CD8-positive, alpha-beta memory T cell (primary cell): ENCODE measurements at regions of chr1 and their contacts with region 1.

Region 1: DNA sequence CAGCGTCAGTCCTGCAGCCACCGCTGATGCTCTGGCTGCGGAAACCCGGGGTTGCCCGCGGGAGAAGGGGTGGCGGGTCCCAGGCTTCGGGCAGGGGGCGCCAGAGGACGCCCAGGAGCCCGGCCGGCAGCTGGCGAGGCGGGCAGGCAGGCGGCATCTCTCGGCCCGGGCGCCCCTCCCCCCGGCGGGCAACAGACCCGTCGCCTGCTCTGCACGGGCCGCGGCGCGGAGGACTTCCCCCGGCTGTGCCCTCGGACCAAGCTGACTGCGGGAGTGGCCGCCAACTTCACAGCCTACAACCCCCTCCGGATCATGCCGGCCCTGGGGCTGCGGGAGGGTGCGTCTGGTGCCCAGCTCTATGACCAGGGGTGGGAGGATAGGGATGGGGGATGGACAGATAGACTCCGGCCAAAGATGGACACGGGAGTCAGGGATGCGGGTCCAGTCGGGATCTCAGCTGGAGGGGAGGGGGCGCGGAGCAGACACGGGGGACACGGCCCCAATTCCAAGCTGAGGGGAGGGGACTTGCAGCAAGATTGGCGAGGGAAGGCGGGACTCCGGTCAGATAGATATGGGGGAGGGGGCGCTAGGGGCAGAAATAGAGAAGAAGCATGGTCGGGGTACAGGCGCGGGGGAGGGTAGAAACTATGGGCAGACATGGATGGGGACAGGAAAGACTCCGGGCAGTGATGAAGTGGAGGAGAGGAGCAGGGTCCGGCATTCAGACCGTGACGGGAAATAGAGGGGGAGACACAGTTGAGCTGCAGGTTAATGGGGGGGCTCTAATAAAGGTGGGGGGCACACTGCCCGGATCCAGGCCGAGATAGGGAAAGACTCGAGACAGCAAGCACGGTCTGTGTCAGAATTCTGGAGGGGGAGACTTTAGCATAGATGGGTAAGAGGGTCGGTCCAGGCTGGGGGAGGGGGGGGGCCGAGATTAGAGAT is 1.1 kb downstream of the ADGRB2 start:
- DNase-seq: peak; percentile 60 to 78 (median 67)
- H3K4me3 ChIP-seq: peak overlapping the region; percentile 60
- H3K4me3 Mint-ChIP-seq: peak overlapping the region; percentile 79 to 92 (median 81)
- H3K27ac ChIP-seq: no peak overlapping the region
- H3K27ac Mint-ChIP-seq: peak overlapping the region in 2 of 8 donors; percentile 21 to 42
- H3K4me1 ChIP-seq: peaks cover 32% of the 10 kb centered on the region
- H3K4me1 Mint-ChIP-seq: peaks cover 20 to 41% (median 22%) of the 10 kb centered on the region in 3 donors
- H3K27me3 ChIP-seq: peaks cover 18% of the 10 kb centered on the region
- H3K27me3 Mint-ChIP-seq: peaks cover 13 to 14% of the 10 kb centered on the region in 2 donors

Region 2: GRCh38 chr1:31750858-31751510 is 12.0 kb before region 1 on chr1:
- CTCF ChIA-PET with region 1: interaction called, 10 read pairs
- POLR2A ChIA-PET with region 1: interaction called, 4 read pairs
- DNase-seq: peak in 4 of 5 donors; percentile 28 to 65 (median 58)
- H3K4me3 ChIP-seq: no peak overlapping the region
- H3K4me3 Mint-ChIP-seq: peak overlapping the region in 6 of 7 donors; percentile 51 to 81 (median 72)
- H3K27ac ChIP-seq: no peak overlapping the region
- H3K27ac Mint-ChIP-seq: peak overlapping the region in 6 of 8 donors; percentile 13 to 90 (median 74)
- H3K4me1 ChIP-seq: peaks cover 36% of the 10 kb centered on the region
- H3K4me1 Mint-ChIP-seq: peaks cover 47 to 54% (median 48%) of the 10 kb centered on the region in 3 donors
- H3K27me3 ChIP-seq: no peaks in the 10 kb centered on the region
- H3K27me3 Mint-ChIP-seq: peaks cover 0 to 3% of the 10 kb centered on the region in 2 donors

Region 3: DNA sequence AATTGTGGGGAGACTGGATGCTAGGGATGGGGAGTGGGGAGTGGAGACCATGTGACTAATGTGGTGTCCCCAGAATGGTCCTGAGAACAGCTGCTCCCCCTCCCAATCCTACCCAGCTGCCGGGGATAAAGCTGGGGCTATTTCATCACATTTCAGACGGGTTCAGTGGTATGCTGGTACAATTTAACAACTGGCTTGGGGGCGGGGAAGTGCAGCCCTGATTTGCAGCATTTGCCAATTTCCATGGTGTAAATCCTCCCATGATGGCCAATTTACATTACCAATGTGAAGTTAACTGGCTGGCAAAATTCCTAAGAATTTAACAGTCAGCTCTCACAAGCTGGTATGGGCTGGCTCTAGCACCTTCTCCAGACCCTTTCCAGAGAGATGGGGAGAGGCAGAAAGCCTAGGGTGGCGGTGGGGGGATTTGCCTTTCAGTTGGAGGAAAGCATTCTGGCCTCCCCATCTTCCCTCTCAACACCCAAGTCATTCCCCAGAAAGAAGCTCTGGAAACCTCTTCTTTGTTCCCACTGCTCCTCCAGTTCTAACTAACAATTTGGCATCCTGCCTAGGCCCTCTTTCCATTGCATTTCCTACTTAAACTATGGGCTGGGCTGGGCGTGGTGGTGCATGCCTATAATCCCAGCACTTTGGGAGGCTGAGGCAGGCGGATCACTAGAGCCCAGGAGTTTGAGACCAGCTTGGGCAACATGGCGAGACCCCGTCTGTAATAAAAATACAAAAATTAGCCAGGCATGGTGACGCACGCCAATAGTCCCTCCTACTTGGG is 12.4 kb after region 1 on chr1:
- CTCF ChIA-PET with region 1: interaction called, 10 read pairs
- POLR2A ChIA-PET with region 1: no interaction called
- DNase-seq: no peak
- H3K4me3 ChIP-seq: no peak overlapping the region
- H3K4me3 Mint-ChIP-seq: no peak overlapping the region
- H3K27ac ChIP-seq: no peak overlapping the region
- H3K27ac Mint-ChIP-seq: no peak overlapping the region
- H3K4me1 ChIP-seq: peaks cover 14% of the 10 kb centered on the region
- H3K4me1 Mint-ChIP-seq: peaks cover 19 to 33% (median 26%) of the 10 kb centered on the region in 3 donors
- H3K27me3 ChIP-seq: peaks cover 22% of the 10 kb centered on the region
- H3K27me3 Mint-ChIP-seq: peaks cover 44 to 55% of the 10 kb centered on the region in 2 donors

Region 4: GRCh38 chr1:31815752-31816500 is 52.9 kb after region 1 on chr1 and contains the start of gene SPOCD1:
- CTCF ChIA-PET with region 1: no interaction called
- POLR2A ChIA-PET with region 1: no interaction called
- DNase-seq: peak; percentile 70 to 86 (median 78)
- H3K4me3 ChIP-seq: no peak within 1 kb of the TSS
- H3K4me3 Mint-ChIP-seq: peak within 1 kb of the TSS in 2 of 7 donors; percentile 23 to 71
- H3K27ac ChIP-seq: no peak within 1 kb of the TSS
- H3K27ac Mint-ChIP-seq: peak within 1 kb of the TSS in 4 of 8 donors; percentile 29 to 87 (median 56)
- H3K4me1 ChIP-seq: peaks cover 6% of the 10 kb centered on the region
- H3K4me1 Mint-ChIP-seq: peaks cover 6 to 17% (median 11%) of the 10 kb centered on the region in 3 donors
- H3K27me3 ChIP-seq: no peaks in the 10 kb centered on the region
- H3K27me3 Mint-ChIP-seq: no peaks in the 10 kb centered on the region
- total RNA-seq, gene SPOCD1: 0.18 TPM in 1 of 2 experiments, not detected in the other